ENCODE measurements at regions of chr22 and their contacts with region 1.

Region 1: GRCh38 chr22:41697126-41697775 is 2.1 kb upstream of the MEI1 start:
- DNase-seq: peak; percentile 87
- H3K4me3 ChIP-seq: no peak overlapping the region
- H3K27ac ChIP-seq: no peak overlapping the region
- H3K4me1 ChIP-seq: peaks cover 3% of the 10 kb centered on the region
- H3K27me3 ChIP-seq: no peaks in the 10 kb centered on the region
- CTCF ChIP-seq: peak; percentile 98 to 99
- POLR2A ChIP-seq: no peak

Region 2: DNA sequence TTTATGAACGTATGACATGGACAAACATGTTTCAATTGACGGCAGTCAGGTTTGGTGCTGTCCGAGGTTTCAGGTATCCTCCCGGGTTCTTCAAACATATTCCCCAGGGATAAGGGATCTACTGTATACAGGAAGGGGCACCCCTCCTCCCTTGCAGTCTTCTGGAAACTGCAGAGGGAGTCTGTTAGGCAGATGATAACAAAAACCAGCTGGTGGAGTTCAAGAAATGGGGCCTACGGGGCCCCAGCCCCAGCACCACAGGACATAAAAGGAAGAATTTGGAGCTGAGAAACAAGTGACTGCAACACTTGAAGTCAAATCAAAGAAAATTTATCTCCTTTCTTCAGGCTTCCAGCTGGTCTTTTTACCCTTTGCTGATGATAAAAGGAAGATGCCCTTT is 40.7 kb before region 1 on chr22:
- CTCF ChIA-PET with region 1: no interaction called
- POLR2A ChIA-PET with region 1: no interaction called
- dilution Hi-C with region 1: no loop called
- intact Hi-C with region 1: no loop called
- DNase-seq: no peak
- H3K4me3 ChIP-seq: no peak overlapping the region
- H3K27ac ChIP-seq: no peak overlapping the region
- H3K4me1 ChIP-seq: no peaks in the 10 kb centered on the region
- H3K27me3 ChIP-seq: no peaks in the 10 kb centered on the region
- CTCF ChIP-seq: no peak
- POLR2A ChIP-seq: no peak

Region 3: DNA sequence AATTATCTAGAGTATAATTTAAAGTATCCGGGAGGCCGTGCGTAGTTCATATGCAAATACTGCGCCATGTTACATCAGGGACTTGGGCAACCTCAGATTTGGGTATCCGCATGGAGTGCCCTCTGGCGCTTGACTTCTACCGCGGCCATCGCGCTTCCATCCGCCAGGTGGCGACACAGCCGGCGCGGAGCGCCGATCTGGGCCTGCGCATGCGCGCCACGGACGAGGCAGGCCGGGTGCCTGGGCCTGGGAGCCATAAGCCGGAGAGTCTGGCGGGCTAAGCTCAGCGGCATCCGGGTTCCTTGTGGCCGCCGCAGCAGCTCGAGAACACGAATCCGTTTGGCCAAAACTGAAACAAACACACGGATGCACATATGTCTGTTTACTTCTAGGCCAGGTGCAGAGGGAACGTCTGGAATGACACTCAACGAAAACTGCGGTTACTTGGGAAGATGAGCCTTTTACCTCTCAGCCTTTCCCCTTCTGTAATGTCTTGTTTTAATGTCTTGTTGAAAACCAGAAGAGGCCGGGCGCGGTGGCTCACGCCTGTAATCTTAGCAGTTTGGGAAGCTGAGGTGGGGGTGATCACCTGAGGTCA is 30.5 kb before region 1 on chr22:
- CTCF ChIA-PET with region 1: interaction called, 40 read pairs
- POLR2A ChIA-PET with region 1: no interaction called
- dilution Hi-C with region 1: no loop called
- intact Hi-C with region 1: loop called (anchors 2 kb)
- DNase-seq: peak; percentile 94
- H3K4me3 ChIP-seq: peak overlapping the region in 2 of 3 experiments; percentile 32 to 51
- H3K27ac ChIP-seq: peak overlapping the region; percentile 87
- H3K4me1 ChIP-seq: peaks cover 15% of the 10 kb centered on the region
- H3K27me3 ChIP-seq: no peaks in the 10 kb centered on the region
- CTCF ChIP-seq: peak; percentile 100
- POLR2A ChIP-seq: peak; percentile 90

Region 4: DNA sequence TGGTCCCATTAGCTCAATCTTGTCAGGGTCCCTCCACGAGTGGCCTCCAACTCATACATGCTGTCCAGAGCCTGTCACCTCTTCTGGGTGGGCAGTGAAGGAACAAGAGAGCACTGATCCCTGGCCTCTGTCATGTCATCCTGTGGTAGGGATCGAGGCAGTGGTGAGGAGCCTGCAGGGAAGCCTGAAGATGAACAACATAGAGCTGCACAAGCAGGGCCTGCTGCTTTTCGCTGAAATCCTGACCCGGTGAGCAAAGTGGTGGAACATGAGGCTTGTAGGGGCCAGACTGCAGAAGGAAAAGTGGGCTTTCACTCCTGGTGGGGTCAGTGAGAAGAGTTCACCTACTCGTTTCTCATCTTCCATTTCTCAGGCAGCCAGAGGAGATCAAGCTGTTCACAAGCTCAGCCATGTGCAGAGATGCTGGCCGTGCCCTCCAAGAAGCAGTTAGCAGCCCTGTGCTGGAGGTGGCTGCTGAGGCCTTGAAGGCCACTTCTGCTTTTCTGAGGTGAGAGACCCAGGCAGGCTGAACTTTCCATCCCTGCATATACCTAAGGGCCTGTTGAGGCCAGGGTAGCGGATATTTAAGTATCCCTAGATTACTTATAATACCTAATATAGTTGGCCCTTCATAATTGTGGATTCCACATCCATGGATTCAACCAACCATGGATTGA is 35.0 kb after region 1 on chr22:
- CTCF ChIA-PET with region 1: interaction called, 10 read pairs
- POLR2A ChIA-PET with region 1: no interaction called
- dilution Hi-C with region 1: no loop called
- intact Hi-C with region 1: no loop called
- DNase-seq: no peak
- H3K4me3 ChIP-seq: no peak overlapping the region
- H3K27ac ChIP-seq: no peak overlapping the region
- H3K4me1 ChIP-seq: no peaks in the 10 kb centered on the region
- H3K27me3 ChIP-seq: peaks cover 0 to 3% of the 10 kb centered on the region in 2 experiments
- CTCF ChIP-seq: no peak
- POLR2A ChIP-seq: no peak

Region 5: GRCh38 chr22:41822317-41823060 is 125.2 kb after region 1 on chr22:
- CTCF ChIA-PET with region 1: interaction called, 13 read pairs
- POLR2A ChIA-PET with region 1: no interaction called
- dilution Hi-C with region 1: no loop called
- intact Hi-C with region 1: no loop called
- DNase-seq: peak; percentile 65
- H3K4me3 ChIP-seq: no peak overlapping the region
- H3K27ac ChIP-seq: no peak overlapping the region
- H3K4me1 ChIP-seq: peaks cover 3% of the 10 kb centered on the region
- H3K27me3 ChIP-seq: no peaks in the 10 kb centered on the region
- CTCF ChIP-seq: peak; percentile 17 to 29
- POLR2A ChIP-seq: no peak

Region 6: DNA sequence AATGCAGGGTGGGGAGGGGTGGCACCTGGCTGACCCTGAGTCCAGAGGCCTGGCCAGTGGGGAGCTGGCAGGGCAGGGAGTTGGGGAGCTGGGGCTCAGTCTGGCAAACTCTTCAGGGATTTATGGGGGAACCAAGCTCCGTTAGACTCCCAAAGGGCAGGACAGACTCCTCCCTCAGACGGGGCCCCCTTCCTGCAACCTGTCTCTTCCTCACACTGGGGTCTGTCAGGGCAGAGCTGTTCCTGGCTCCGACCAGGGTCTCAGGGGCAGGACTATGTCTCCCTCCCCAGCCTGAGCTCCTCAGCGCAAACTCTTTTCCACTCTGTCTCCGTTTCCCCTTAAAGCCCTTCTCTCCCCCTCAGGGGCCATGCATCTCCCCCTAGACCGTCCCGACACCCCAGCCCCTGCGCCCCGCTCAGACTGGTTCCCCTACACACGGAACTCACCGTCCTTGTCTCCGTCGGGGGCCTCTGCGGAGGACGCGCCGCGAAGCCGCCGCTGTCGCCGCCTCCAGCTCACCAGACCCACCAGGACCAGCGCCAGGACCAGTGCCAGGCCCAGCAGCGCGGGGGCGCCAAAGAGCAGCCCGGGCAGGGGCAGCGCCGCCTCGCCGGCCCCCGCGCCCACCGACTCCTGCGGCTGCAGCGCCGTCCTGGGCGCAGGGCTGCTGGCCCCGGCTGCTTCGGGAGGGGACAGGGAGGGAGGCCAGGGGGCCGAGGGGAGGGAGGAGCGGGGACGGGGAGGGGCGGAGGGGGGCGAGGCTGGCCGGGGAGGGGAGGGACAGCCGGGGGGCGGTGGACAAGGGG is 228.6 kb after region 1 on chr22:
- CTCF ChIA-PET with region 1: interaction called, 27 read pairs
- POLR2A ChIA-PET with region 1: no interaction called
- dilution Hi-C with region 1: no loop called
- intact Hi-C with region 1: no loop called
- DNase-seq: peak; percentile 49
- H3K4me3 ChIP-seq: peak overlapping the region in 1 of 3 experiments; percentile 19
- H3K27ac ChIP-seq: no peak overlapping the region
- H3K4me1 ChIP-seq: peaks cover 4% of the 10 kb centered on the region
- H3K27me3 ChIP-seq: peaks cover 9 to 14% of the 10 kb centered on the region in 2 experiments
- CTCF ChIP-seq: peak; percentile 74 to 78
- POLR2A ChIP-seq: no peak

Region 7: DNA sequence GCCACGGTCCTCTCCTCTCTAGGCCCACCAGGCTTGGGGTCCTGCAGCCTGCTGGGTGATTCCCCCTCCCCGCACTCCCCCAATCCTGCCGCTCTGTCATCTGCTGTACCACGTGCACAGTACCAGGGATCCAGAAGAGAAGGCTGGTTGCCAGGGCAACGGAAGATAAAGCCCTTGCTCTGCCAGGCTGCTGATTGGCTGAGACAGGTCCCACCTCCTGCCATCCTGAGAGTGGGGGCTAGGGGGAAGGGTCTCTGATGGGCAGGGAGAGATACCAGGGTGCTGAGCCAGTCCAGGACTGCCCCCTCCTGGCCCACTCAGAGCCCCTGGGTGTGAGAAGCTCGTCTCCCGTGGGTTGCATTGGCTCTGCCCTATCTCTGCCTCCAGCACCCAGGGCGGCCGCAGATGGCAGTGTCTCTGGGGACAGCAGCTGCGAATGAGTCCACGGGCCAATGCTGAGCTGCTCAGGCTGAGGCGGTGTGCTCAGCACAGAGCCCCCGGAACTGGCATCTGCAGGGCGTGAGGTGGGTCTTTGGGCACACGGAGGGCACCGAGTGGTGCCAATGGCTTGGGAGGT is 254.7 kb after region 1 on chr22 and contains the start of gene SMIM45:
- CTCF ChIA-PET with region 1: interaction called, 23 read pairs
- POLR2A ChIA-PET with region 1: no interaction called
- dilution Hi-C with region 1: no loop called
- intact Hi-C with region 1: no loop called
- DNase-seq: no peak
- H3K4me3 ChIP-seq: no peak within 1 kb of the TSS
- H3K27ac ChIP-seq: no peak within 1 kb of the TSS
- H3K4me1 ChIP-seq: no peaks in the 10 kb centered on the region
- H3K27me3 ChIP-seq: no peaks in the 10 kb centered on the region
- CTCF ChIP-seq: no peak
- POLR2A ChIP-seq: no peak

Region 8: DNA sequence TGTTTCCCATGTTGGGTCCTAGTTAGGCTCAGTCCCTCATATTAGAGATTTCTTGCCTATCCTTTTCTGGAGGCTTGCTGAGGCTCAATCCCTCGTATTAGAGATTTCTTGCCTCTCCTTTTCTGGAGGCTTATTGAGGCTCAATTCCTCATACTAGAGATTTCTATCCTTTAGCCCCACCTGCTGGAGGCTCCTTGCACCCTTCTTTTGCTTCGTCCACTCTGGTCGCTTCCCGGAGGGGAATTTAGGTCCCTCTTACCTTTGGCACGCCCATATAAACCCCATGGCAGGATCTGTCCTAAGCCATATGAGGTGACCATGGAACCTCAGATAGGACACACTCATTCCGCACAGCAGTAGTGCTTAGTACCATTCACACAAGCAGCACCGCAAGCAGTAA is 417.5 kb after region 1 on chr22:
- CTCF ChIA-PET with region 1: interaction called, 7 read pairs
- POLR2A ChIA-PET with region 1: no interaction called
- dilution Hi-C with region 1: no loop called
- intact Hi-C with region 1: loop called (anchors 10 kb)
- DNase-seq: peak; percentile 41
- H3K4me3 ChIP-seq: no peak overlapping the region
- H3K27ac ChIP-seq: no peak overlapping the region
- H3K4me1 ChIP-seq: no peaks in the 10 kb centered on the region
- H3K27me3 ChIP-seq: no peaks in the 10 kb centered on the region
- CTCF ChIP-seq: peak; percentile 32 to 56
- POLR2A ChIP-seq: no peak

Measured in endothelial cell of umbilical vein (primary cell).